ENCODE measurements at regions of chr1 and their contacts with region 1.

Region 1: GRCh38 chr1:16459352-16459925 is 18.9 kb downstream of the NECAP2 start:
- DNase-seq: no peak

Region 2: GRCh38 chr1:15272009-15272788 is 1187.2 kb before region 1 on chr1:
- intact Hi-C with region 1: no loop called
- DNase-seq: no peak

Region 3: GRCh38 chr1:16391411-16391810 is 68.0 kb before region 1 on chr1:
- intact Hi-C with region 1: loop called in 1 of 2 experiments (anchors 2 kb)
- DNase-seq: no peak

Region 4: GRCh38 chr1:16420424-16421118 is 38.9 kb before region 1 on chr1:
- intact Hi-C with region 1: loop called in 1 of 2 experiments (anchors 1 kb)
- DNase-seq: no peak

Region 5: GRCh38 chr1:17551755-17552234 is 1092.4 kb after region 1 on chr1:
- intact Hi-C with region 1: no loop called
- DNase-seq: no peak

Measured in posterior vena cava (tissue), 2 donors.